Endothelial cell of umbilical vein (primary cell): ENCODE measurements at regions of chr4 and their contacts with region 1.

Region 1: GRCh38 chr4:185665655-185666054 is 130.3 kb upstream of the PDLIM3 start:
- DNase-seq: no peak
- H3K4me3 ChIP-seq: no peak overlapping the region
- H3K27ac ChIP-seq: no peak overlapping the region
- H3K4me1 ChIP-seq: no peaks in the 10 kb centered on the region
- H3K27me3 ChIP-seq: no peaks in the 10 kb centered on the region
- CTCF ChIP-seq: no peak
- POLR2A ChIP-seq: no peak

Region 2: GRCh38 chr4:185587427-185588161 is 78.1 kb before region 1 on chr4:
- CTCF ChIA-PET with region 1: no interaction called
- POLR2A ChIA-PET with region 1: no interaction called
- dilution Hi-C with region 1: no loop called
- intact Hi-C with region 1: no loop called
- DNase-seq: no peak
- H3K4me3 ChIP-seq: no peak overlapping the region
- H3K27ac ChIP-seq: no peak overlapping the region
- H3K4me1 ChIP-seq: no peaks in the 10 kb centered on the region
- H3K27me3 ChIP-seq: no peaks in the 10 kb centered on the region
- CTCF ChIP-seq: no peak
- POLR2A ChIP-seq: no peak

Region 3: GRCh38 chr4:185685804-185686203 is 20.1 kb after region 1 on chr4:
- CTCF ChIA-PET with region 1: no interaction called
- POLR2A ChIA-PET with region 1: no interaction called
- dilution Hi-C with region 1: no loop called
- intact Hi-C with region 1: no loop called
- DNase-seq: no peak
- H3K4me3 ChIP-seq: no peak overlapping the region
- H3K27ac ChIP-seq: no peak overlapping the region
- H3K4me1 ChIP-seq: peaks cover 8% of the 10 kb centered on the region
- H3K27me3 ChIP-seq: no peaks in the 10 kb centered on the region
- CTCF ChIP-seq: no peak
- POLR2A ChIP-seq: no peak

Region 4: GRCh38 chr4:185945906-185946305 is 280.3 kb after region 1 on chr4:
- CTCF ChIA-PET with region 1: no interaction called
- POLR2A ChIA-PET with region 1: no interaction called
- dilution Hi-C with region 1: loop called (anchors 10 kb)
- intact Hi-C with region 1: no loop called
- DNase-seq: no peak
- H3K4me3 ChIP-seq: no peak overlapping the region
- H3K27ac ChIP-seq: no peak overlapping the region
- H3K4me1 ChIP-seq: no peaks in the 10 kb centered on the region
- H3K27me3 ChIP-seq: no peaks in the 10 kb centered on the region
- CTCF ChIP-seq: no peak
- POLR2A ChIP-seq: no peak